IMR-90 (cell line): ENCODE measurements at regions of chr1 and their contacts with region 1.

Region 1: DNA sequence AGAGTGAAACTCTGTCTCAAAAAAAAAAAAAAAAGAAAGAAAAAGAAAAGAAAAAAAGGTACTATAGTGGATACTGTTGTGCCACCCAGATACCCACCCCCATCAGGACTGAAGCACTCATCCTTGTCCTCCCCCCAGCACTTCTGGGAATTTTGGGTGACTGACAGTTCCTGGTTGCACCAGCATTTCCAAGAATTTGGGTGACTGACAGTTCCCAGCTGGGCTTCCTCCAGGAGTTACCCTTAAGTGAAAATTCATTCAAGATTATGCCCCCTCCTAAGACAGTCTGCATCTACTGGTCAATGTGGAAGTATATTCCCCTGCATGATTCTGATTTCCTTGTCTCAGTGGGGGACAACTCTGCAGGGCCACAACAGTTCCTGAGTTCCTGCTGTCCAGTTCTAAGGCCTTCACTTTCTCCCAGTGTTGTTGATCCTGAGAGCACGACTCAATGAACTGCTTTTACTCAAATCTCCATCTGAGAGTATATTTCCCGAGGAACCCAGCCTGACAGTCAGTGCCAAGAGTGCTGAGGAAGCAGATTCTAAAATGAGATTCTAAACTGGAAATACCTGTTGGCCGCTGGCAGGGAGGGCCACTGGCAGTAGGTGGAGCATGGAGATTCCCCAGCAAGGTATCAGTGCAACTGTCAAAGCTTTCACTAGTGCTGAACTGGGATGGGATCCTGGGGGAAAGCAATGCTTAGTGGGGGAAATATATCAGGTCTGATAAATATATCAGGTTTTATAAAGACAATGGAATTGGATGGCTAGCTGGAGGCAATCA is 18.5 kb downstream of the RIIAD1 start:
- DNase-seq: no peak
- ATAC-seq: no peak
- H3K4me3 ChIP-seq: no peak overlapping the region
- H3K27ac ChIP-seq: no peak overlapping the region
- H3K4me1 ChIP-seq: no peaks in the 10 kb centered on the region
- H3K27me3 ChIP-seq: peaks cover 41% of the 10 kb centered on the region
- CTCF ChIP-seq: no peak
- POLR2A ChIP-seq: no peak
- RAD21 ChIP-seq: no peak

Region 2: GRCh38 chr1:151198255-151199127 is 541.3 kb before region 1 on chr1 and contains the start of gene PIP5K1A:
- CTCF ChIA-PET with region 1: no interaction called
- POLR2A ChIA-PET with region 1: no interaction called
- dilution Hi-C with region 1: no loop called
- in situ Hi-C with region 1: no loop called
- intact Hi-C with region 1: loop called (anchors 5 kb)
- DNase-seq: peak; percentile 97
- ATAC-seq: peak; percentile 86
- H3K4me3 ChIP-seq: peak within 1 kb of the TSS; percentile 98
- H3K27ac ChIP-seq: peak within 1 kb of the TSS; percentile 96
- H3K4me1 ChIP-seq: peaks cover 5% of the 10 kb centered on the region; the same call in 1 of the 2 replicates
- H3K27me3 ChIP-seq: no peaks in the 10 kb centered on the region
- CTCF ChIP-seq: no peak
- POLR2A ChIP-seq: peak; percentile 88
- RAD21 ChIP-seq: no peak
- total RNA-seq, gene PIP5K1A: 52.5 and 59.1 TPM in 2 replicates

Region 3: GRCh38 chr1:151443846-151444782 is 295.7 kb before region 1 on chr1:
- CTCF ChIA-PET with region 1: no interaction called
- POLR2A ChIA-PET with region 1: no interaction called
- dilution Hi-C with region 1: no loop called
- in situ Hi-C with region 1: loop called (anchors 5 kb)
- intact Hi-C with region 1: loop called (anchors 1 kb)
- DNase-seq: peak; percentile 86
- ATAC-seq: peak; percentile 99
- H3K4me3 ChIP-seq: no peak overlapping the region
- H3K27ac ChIP-seq: no peak overlapping the region
- H3K4me1 ChIP-seq: no peaks in the 10 kb centered on the region
- H3K27me3 ChIP-seq: no peaks in the 10 kb centered on the region
- CTCF ChIP-seq: peak; percentile 89
- POLR2A ChIP-seq: no peak
- RAD21 ChIP-seq: peak; percentile 80

Region 4: DNA sequence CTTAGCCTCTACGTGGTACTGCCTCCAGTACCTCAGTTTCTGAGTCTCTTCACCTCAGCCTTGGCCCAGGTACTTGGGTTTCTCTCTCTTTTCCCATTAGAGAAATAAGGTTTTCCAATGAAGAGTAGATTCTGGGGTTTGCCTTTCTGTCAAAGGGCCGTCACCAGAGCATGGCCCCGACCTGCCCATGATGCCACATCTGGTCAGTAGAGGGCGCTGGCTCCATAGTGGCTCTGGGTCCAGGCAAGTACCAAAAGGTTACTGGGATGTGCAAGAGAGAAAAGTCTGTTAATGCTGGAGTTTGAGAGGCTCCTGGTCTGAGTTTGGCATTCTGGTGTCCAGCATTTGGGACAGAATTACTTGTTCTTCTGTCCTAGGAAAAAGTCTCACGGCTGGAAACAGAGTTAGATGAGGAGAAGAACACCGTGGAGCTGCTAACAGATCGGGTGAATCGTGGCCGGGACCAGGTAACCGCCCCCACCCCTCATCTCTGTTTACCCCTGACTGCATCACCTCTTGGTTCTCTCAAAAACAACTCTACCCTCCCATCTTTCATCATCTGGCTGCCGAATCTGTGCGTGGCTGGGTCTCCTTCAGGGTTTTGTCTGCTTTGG is 205.0 kb before region 1 on chr1:
- CTCF ChIA-PET with region 1: interaction called, 3 read pairs
- POLR2A ChIA-PET with region 1: no interaction called
- dilution Hi-C with region 1: no loop called
- in situ Hi-C with region 1: loop called (anchors 10 kb)
- intact Hi-C with region 1: loop called (anchors 1 kb)
- DNase-seq: peak; percentile 67
- ATAC-seq: peak; percentile 71
- H3K4me3 ChIP-seq: no peak overlapping the region
- H3K27ac ChIP-seq: no peak overlapping the region
- H3K4me1 ChIP-seq: peaks cover 21% of the 10 kb centered on the region
- H3K27me3 ChIP-seq: no peaks in the 10 kb centered on the region
- CTCF ChIP-seq: peak; percentile 92
- POLR2A ChIP-seq: peak; percentile 44; the same call in 1 of the 2 replicates
- RAD21 ChIP-seq: peak; percentile 88

Region 5: DNA sequence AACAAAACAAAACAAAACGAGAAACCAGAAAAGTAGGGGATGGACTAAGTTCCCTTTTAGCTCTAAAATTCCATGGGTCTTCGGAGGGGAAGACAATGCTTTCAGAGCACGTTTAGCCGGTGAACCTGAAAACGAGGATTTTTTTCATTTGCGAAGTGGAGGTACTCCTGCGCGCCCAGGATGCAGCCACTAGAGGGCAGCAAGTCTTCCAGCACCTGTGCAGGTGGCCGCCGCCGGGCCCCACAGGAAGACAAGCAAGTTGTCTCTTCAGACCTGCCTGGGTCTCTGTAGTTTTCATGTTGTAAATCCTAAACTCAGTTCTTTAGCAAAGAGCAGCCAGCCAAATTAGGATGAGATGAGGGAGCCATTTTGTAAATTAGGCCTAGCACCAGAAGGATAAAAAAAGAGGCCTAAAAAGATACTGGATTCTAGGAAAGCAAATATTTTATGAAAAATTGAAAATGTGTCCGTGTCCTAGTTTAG is 145.6 kb before region 1 on chr1:
- CTCF ChIA-PET with region 1: interaction called, 3 read pairs
- POLR2A ChIA-PET with region 1: no interaction called
- dilution Hi-C with region 1: no loop called
- in situ Hi-C with region 1: no loop called
- intact Hi-C with region 1: loop called (anchors 2 kb)
- DNase-seq: no peak
- ATAC-seq: peak; percentile 46; the same call in 1 of the 2 replicates
- H3K4me3 ChIP-seq: no peak overlapping the region
- H3K27ac ChIP-seq: no peak overlapping the region
- H3K4me1 ChIP-seq: no peaks in the 10 kb centered on the region
- H3K27me3 ChIP-seq: no peaks in the 10 kb centered on the region
- CTCF ChIP-seq: peak; percentile 72
- POLR2A ChIP-seq: no peak
- RAD21 ChIP-seq: peak; percentile 77